AG04449 (cell line): ENCODE measurements at regions of chr9 and their contacts with region 1.

Region 1: GRCh38 chr9:92140074-92140753 is 25.0 kb upstream of the SPTLC1 start:
- DNase-seq: no peak
- H3K4me3 ChIP-seq: peak overlapping the region; percentile 12; the same call in 1 of the 2 replicates
- CTCF ChIP-seq: peak; percentile 99

Region 2: GRCh38 chr9:92115071-92115858 is 24.9 kb before region 1 on chr9 and contains the start of gene SPTLC1:
- CTCF ChIA-PET with region 1: interaction called, 42 read pairs
- POLR2A ChIA-PET with region 1: no interaction called
- DNase-seq: peak; percentile 66
- H3K4me3 ChIP-seq: peak within 1 kb of the TSS; percentile 95
- CTCF ChIP-seq: no peak

Region 3: GRCh38 chr9:92176068-92176799 is 36.0 kb after region 1 on chr9:
- CTCF ChIA-PET with region 1: interaction called, 21 read pairs
- POLR2A ChIA-PET with region 1: no interaction called
- DNase-seq: no peak
- H3K4me3 ChIP-seq: no peak overlapping the region
- CTCF ChIP-seq: peak; percentile 9

Region 4: GRCh38 chr9:92223758-92224157 is 83.5 kb after region 1 on chr9:
- CTCF ChIA-PET with region 1: interaction called, 72 read pairs
- POLR2A ChIA-PET with region 1: no interaction called
- DNase-seq: no peak
- H3K4me3 ChIP-seq: no peak overlapping the region
- CTCF ChIP-seq: no peak

Region 5: DNA sequence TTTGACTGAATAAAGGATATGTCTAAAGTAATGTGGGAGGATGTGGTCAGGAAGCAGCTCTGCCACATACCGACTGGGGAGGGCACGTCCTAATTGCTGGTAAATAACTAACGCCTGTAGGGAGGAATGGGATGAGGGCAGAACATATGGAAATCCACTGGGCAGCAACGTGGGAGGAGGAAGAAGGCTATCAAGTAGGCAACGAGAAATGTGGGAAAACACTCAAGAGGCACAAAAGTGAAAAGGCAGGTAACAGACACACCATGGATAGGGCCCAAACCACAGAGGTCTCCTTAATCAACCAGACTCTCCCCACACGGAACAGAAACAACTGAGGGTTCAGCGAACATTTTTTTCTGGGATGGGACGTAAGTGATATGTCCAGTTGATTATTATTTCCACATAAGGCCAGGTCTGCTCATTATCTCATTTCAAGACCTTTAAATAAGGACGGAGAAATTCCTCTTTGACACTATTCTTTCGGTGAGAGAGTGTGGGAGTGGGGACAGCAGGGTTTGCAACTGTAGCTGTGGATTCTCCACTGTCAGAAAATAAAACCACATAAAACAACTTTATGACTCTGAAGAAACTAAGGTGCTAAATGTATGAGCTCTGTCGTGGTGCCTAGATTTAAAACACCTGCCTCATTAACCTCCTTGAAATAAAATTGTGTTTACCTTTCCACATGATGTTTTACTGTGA is 136.3 kb after region 1 on chr9:
- CTCF ChIA-PET with region 1: interaction called, 53 read pairs
- POLR2A ChIA-PET with region 1: interaction called, 3 read pairs
- DNase-seq: no peak
- H3K4me3 ChIP-seq: no peak overlapping the region
- CTCF ChIP-seq: no peak

Region 6: DNA sequence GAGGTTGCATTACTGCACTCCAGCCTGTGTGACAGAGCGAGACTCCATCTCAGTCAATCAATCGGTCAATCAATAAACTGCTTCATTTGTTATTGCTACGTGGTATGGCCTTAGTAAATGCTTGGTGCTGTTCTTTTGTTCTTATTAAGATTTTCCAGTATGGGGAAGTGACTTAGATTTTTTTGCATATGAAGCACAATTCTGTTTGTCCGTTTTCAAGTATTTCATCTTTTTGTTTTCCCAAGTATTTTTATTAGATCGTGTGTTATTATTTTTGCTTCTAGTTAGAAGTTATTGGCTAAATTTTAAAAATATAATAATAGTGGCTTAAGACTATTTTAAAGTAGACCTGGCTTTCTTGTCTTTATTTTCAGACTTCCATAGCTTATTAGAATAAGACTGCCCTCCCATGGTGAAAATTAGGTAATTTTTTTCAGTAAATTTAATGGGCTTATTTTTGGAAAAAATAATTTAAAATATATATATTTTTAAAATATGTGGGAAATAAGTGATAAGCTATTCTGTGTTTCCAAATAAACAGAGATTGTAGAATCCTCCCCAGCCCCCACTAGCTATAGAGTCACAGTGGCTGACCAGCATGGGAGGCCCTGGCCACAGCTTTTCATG is 298.8 kb after region 1 on chr9:
- CTCF ChIA-PET with region 1: interaction called, 21 read pairs
- POLR2A ChIA-PET with region 1: no interaction called
- DNase-seq: no peak
- H3K4me3 ChIP-seq: no peak overlapping the region
- CTCF ChIP-seq: no peak